ENCODE measurements at regions of chr2 and their contacts with region 1.

Region 1: GRCh38 chr2:134245340-134245984 is 8.4 kb upstream of the MGAT5 start:
- DNase-seq: peak; percentile 63 to 87 (median 76)
- ATAC-seq: peak; percentile 59
- H3K4me3 ChIP-seq: no peak overlapping the region
- H3K4me3 Mint-ChIP-seq: peak overlapping the region; percentile 15
- H3K27ac ChIP-seq: no peak overlapping the region
- H3K27ac Mint-ChIP-seq: peak overlapping the region; percentile 65
- H3K4me1 ChIP-seq: peaks cover 70% of the 10 kb centered on the region
- H3K4me1 Mint-ChIP-seq: peaks cover 96% of the 10 kb centered on the region
- H3K27me3 ChIP-seq: no peaks in the 10 kb centered on the region
- H3K27me3 Mint-ChIP-seq: no peaks in the 10 kb centered on the region
- CTCF ChIP-seq: peak; percentile 86

Region 2: GRCh38 chr2:134207564-134208209 is 37.8 kb before region 1 on chr2:
- CTCF ChIA-PET with region 1: interaction called, 13 read pairs
- POLR2A ChIA-PET with region 1: interaction called, 6 read pairs
- intact Hi-C with region 1: loop called in 1 of 2 experiments (anchors 5 kb)
- DNase-seq: peak; percentile 49 to 83 (median 61)
- ATAC-seq: peak; percentile 93
- H3K4me3 ChIP-seq: no peak overlapping the region
- H3K4me3 Mint-ChIP-seq: no peak overlapping the region
- H3K27ac ChIP-seq: no peak overlapping the region
- H3K27ac Mint-ChIP-seq: no peak overlapping the region
- H3K4me1 ChIP-seq: peaks cover 35% of the 10 kb centered on the region
- H3K4me1 Mint-ChIP-seq: peaks cover 5% of the 10 kb centered on the region
- H3K27me3 ChIP-seq: no peaks in the 10 kb centered on the region
- H3K27me3 Mint-ChIP-seq: no peaks in the 10 kb centered on the region
- CTCF ChIP-seq: peak; percentile 64

Region 3: DNA sequence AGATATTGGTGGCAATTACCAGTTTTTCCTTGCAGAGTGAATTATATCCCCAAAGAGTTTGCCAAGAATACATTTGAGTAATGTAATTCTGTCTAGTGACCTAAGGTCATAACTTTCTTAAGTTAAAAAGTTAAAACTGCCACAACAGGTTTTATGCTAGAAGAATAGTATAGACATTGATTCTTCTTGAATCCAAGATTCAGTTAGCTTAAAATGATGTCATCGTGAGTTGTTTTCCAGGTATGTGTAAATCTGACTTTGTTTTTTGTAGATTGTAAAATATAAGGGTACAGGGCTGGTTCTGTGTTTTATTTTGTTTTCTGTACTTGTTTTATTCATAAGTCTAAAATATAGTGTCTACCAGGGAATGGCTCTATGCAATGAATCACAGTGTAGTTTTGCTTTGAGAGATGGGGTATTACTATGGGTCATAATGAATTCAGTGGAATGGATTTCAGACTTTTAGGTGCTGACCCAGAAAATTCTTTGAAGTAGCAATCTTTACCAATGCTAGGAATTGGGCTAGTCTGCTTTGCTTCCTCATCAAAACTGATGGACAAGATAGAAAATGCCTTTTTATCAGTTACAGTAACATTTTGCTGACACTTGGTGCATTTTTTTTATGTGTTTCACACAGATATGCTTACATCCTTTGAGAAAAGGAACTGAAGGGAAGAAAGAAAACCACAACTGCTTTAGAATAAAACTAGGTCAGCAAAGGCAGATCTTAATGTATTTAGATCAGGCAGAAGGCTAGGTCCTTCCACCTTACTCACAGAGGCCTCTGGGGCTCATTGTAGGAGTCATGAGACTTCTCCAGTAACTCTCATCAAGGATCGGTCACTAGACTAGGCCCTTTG is 12.4 kb before region 1 on chr2:
- CTCF ChIA-PET with region 1: interaction called, 18 read pairs
- POLR2A ChIA-PET with region 1: interaction called, 13 read pairs
- intact Hi-C with region 1: loop called in 1 of 2 experiments (anchors 2 kb)
- DNase-seq: peak in 5 of 14 experiments; percentile 13 to 84 (median 62)
- ATAC-seq: peak; percentile 75
- H3K4me3 ChIP-seq: peak overlapping the region; percentile 4
- H3K4me3 Mint-ChIP-seq: peak overlapping the region; percentile 52
- H3K27ac ChIP-seq: peak overlapping the region; percentile 40 to 71
- H3K27ac Mint-ChIP-seq: peak overlapping the region; percentile 83
- H3K4me1 ChIP-seq: peaks cover 66% of the 10 kb centered on the region
- H3K4me1 Mint-ChIP-seq: peaks cover 85% of the 10 kb centered on the region
- H3K27me3 ChIP-seq: no peaks in the 10 kb centered on the region
- H3K27me3 Mint-ChIP-seq: no peaks in the 10 kb centered on the region
- CTCF ChIP-seq: no peak

Region 4: GRCh38 chr2:134282629-134283400 is 37.4 kb after region 1 on chr2:
- CTCF ChIA-PET with region 1: interaction called, 3 read pairs
- POLR2A ChIA-PET with region 1: no interaction called
- intact Hi-C with region 1: loop called (anchors 5 kb)
- DNase-seq: peak in 5 of 14 experiments; percentile 11 to 50 (median 47)
- ATAC-seq: peak; percentile 78
- H3K4me3 ChIP-seq: no peak overlapping the region
- H3K4me3 Mint-ChIP-seq: peak overlapping the region; percentile 61
- H3K27ac ChIP-seq: peak overlapping the region; percentile 58 to 61
- H3K27ac Mint-ChIP-seq: peak overlapping the region; percentile 82
- H3K4me1 ChIP-seq: peaks cover 56% of the 10 kb centered on the region
- H3K4me1 Mint-ChIP-seq: peaks cover 75% of the 10 kb centered on the region
- H3K27me3 ChIP-seq: no peaks in the 10 kb centered on the region
- H3K27me3 Mint-ChIP-seq: no peaks in the 10 kb centered on the region
- CTCF ChIP-seq: no peak

Region 5: DNA sequence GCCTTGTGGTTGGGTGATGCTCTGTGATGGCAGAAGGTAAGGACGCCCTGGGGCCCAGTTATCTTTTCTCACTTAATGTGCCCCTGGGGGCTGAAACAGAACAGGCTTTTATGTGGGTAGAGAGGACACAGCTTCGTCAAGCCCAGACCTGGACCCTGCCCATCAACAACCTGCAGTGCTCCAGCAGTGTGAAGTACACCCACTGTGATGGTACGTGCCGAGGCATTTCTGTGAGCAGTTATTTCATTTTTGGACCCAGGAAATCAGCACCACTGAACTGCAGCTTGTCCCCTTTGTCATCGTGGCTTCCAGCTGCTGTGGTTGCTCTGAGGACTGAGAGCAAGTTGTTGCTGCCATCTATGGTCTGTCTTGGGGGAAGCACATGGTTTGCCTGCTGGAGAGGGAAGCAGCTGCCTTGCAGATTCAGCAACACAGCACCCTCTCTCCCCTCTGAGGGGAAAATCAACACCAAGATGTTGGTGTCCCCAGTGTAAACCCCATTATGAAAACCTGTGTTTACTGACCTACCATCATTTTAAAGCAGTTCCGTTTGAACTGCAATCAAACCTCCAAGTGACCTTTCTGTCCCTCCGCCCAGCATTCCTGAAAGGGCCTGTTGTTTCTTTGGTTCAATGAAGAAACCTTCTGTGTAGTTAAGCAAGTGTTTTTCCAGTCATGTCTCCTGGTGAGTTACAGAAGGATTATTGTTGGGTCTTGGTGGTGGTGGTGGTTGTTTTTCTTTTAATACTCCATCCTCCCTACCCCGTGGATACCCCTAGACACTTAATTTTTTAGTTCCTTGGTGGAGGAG is 166.6 kb after region 1 on chr2:
- CTCF ChIA-PET with region 1: interaction called, 5 read pairs
- POLR2A ChIA-PET with region 1: no interaction called
- intact Hi-C with region 1: loop called (anchors 2 to 5 kb)
- DNase-seq: peak; percentile 51 to 84 (median 62)
- ATAC-seq: peak; percentile 97
- H3K4me3 ChIP-seq: no peak overlapping the region
- H3K4me3 Mint-ChIP-seq: no peak overlapping the region
- H3K27ac ChIP-seq: no peak overlapping the region
- H3K27ac Mint-ChIP-seq: no peak overlapping the region
- H3K4me1 ChIP-seq: peaks cover 34% of the 10 kb centered on the region
- H3K4me1 Mint-ChIP-seq: peaks cover 54% of the 10 kb centered on the region
- H3K27me3 ChIP-seq: no peaks in the 10 kb centered on the region
- H3K27me3 Mint-ChIP-seq: no peaks in the 10 kb centered on the region
- CTCF ChIP-seq: peak; percentile 62

Region 6: GRCh38 chr2:134436706-134437105 is 191.2 kb after region 1 on chr2:
- CTCF ChIA-PET with region 1: no interaction called
- POLR2A ChIA-PET with region 1: no interaction called
- intact Hi-C with region 1: no loop called
- DNase-seq: no peak
- ATAC-seq: no peak
- H3K4me3 ChIP-seq: no peak overlapping the region
- H3K4me3 Mint-ChIP-seq: no peak overlapping the region
- H3K27ac ChIP-seq: no peak overlapping the region
- H3K27ac Mint-ChIP-seq: no peak overlapping the region
- H3K4me1 ChIP-seq: no peaks in the 10 kb centered on the region
- H3K4me1 Mint-ChIP-seq: no peaks in the 10 kb centered on the region
- H3K27me3 ChIP-seq: no peaks in the 10 kb centered on the region
- H3K27me3 Mint-ChIP-seq: no peaks in the 10 kb centered on the region
- CTCF ChIP-seq: no peak